CD4-positive, alpha-beta T cell (primary cell): ENCODE measurements at regions of chr11 and their contacts with region 1.

Region 1: DNA sequence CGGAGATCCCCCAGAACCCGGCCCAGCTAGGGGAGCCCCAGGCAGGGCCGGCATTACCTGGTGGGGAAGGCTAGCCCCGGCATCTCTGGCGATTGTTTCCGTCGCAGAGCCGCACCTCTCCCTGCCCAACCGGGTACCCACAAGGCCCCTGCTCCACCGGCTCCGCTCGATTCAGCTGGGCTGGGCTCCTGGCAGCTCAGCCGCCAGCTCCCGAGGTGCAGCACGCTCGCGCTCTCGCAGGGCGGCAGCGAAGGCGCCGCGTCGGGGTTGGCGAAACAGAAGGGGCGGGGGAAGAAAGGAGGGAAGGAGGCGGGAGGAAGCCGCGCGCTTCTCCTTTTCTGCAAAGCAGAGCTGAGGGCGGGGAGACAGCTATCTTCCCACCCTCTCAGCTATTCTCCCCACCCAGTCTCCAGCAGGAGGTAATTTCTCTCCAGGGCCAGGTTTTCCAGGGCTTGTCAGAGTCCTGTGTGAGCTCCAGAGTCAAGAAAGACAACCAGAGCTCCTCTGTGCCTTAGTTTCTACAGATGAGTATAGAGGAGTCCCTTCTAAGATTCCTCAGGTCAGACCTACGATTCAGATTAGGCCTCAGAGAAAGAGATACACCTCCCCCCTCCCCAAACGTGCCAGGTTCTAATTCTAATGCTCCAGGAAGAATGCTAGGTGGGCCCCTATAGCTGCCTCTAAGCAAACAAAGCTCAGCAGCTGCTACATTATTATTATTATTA is 62.0 kb downstream of the PAK1 start:
- DNase-seq: peak; percentile 59 to 89 (median 72)
- ATAC-seq: peak; percentile 99
- H3K4me3 ChIP-seq: peak overlapping the region; percentile 73
- H3K4me3 Mint-ChIP-seq: peak overlapping the region; percentile 97
- H3K27ac ChIP-seq: peak overlapping the region in 1 of 2 donors; percentile 25
- H3K27ac Mint-ChIP-seq: peak overlapping the region; percentile 76
- H3K4me1 ChIP-seq: peaks cover 22% of the 10 kb centered on the region
- H3K4me1 Mint-ChIP-seq: peaks cover 42% of the 10 kb centered on the region
- H3K27me3 ChIP-seq: no peaks in the 10 kb centered on the region
- H3K27me3 Mint-ChIP-seq: no peaks in the 10 kb centered on the region
- CTCF ChIP-seq: peak; percentile 11

Region 2: DNA sequence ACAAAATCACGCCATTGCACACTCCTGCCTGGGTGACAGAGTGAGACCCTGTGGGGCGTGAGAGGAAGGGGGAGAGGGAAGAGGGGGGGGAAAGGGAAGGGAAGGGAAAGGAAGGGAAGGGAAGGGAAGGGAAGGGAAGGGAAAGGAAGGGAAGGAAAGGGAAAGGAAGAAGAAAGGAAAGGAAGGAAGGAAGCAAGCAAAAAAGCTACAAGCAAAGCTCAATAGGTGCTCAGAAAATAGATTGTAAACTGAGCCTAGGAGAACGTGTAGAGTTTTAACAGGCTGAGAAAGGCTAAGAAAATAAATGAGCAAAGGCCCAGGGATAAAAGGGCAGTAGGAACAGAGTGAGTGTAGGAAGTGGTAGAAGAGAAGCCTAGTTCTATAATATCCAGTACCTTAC is 79.6 kb before region 1 on chr11:
- CTCF ChIA-PET with region 1: no interaction called
- POLR2A ChIA-PET with region 1: no interaction called
- intact Hi-C with region 1: no loop called
- DNase-seq: no peak
- ATAC-seq: no peak
- H3K4me3 ChIP-seq: no peak overlapping the region
- H3K4me3 Mint-ChIP-seq: no peak overlapping the region
- H3K27ac ChIP-seq: no peak overlapping the region
- H3K27ac Mint-ChIP-seq: no peak overlapping the region
- H3K4me1 ChIP-seq: no peaks in the 10 kb centered on the region
- H3K4me1 Mint-ChIP-seq: no peaks in the 10 kb centered on the region
- H3K27me3 ChIP-seq: no peaks in the 10 kb centered on the region
- H3K27me3 Mint-ChIP-seq: no peaks in the 10 kb centered on the region
- CTCF ChIP-seq: no peak

Region 3: GRCh38 chr11:77473801-77474683 is 62.2 kb after region 1 on chr11 and contains the start of gene PAK1:
- CTCF ChIA-PET with region 1: interaction called, 4 read pairs
- POLR2A ChIA-PET with region 1: interaction called, 8 read pairs
- intact Hi-C with region 1: loop called (anchors 2 to 5 kb)
- DNase-seq: peak; percentile 61 to 99 (median 85)
- ATAC-seq: peak; percentile 73
- H3K4me3 ChIP-seq: peak within 1 kb of the TSS; percentile 64
- H3K4me3 Mint-ChIP-seq: peak within 1 kb of the TSS; percentile 97
- H3K27ac ChIP-seq: peak within 1 kb of the TSS in 1 of 2 donors; percentile 29
- H3K27ac Mint-ChIP-seq: peak within 1 kb of the TSS; percentile 96
- H3K4me1 ChIP-seq: peaks cover 14% of the 10 kb centered on the region
- H3K4me1 Mint-ChIP-seq: peaks cover 25% of the 10 kb centered on the region
- H3K27me3 ChIP-seq: peaks cover 2 to 5% of the 10 kb centered on the region in 2 experiments
- H3K27me3 Mint-ChIP-seq: peaks cover 10% of the 10 kb centered on the region
- CTCF ChIP-seq: no peak
- total RNA-seq, gene PAK1: 6.9 to 12.6 TPM

Region 4: GRCh38 chr11:77497368-77497767 is 85.5 kb after region 1 on chr11:
- CTCF ChIA-PET with region 1: no interaction called
- POLR2A ChIA-PET with region 1: no interaction called
- intact Hi-C with region 1: no loop called
- DNase-seq: peak in 1 of 14 experiments; percentile 10
- ATAC-seq: no peak
- H3K4me3 ChIP-seq: no peak overlapping the region
- H3K4me3 Mint-ChIP-seq: no peak overlapping the region
- H3K27ac ChIP-seq: no peak overlapping the region
- H3K27ac Mint-ChIP-seq: no peak overlapping the region
- H3K4me1 ChIP-seq: no peaks in the 10 kb centered on the region
- H3K4me1 Mint-ChIP-seq: no peaks in the 10 kb centered on the region
- H3K27me3 ChIP-seq: peaks cover 3% of the 10 kb centered on the region in 2 experiments
- H3K27me3 Mint-ChIP-seq: peaks cover 10% of the 10 kb centered on the region
- CTCF ChIP-seq: no peak